Heart right ventricle (tissue), 16 donors: ENCODE measurements at regions of chr9 and their contacts with region 1.

Region 1: DNA sequence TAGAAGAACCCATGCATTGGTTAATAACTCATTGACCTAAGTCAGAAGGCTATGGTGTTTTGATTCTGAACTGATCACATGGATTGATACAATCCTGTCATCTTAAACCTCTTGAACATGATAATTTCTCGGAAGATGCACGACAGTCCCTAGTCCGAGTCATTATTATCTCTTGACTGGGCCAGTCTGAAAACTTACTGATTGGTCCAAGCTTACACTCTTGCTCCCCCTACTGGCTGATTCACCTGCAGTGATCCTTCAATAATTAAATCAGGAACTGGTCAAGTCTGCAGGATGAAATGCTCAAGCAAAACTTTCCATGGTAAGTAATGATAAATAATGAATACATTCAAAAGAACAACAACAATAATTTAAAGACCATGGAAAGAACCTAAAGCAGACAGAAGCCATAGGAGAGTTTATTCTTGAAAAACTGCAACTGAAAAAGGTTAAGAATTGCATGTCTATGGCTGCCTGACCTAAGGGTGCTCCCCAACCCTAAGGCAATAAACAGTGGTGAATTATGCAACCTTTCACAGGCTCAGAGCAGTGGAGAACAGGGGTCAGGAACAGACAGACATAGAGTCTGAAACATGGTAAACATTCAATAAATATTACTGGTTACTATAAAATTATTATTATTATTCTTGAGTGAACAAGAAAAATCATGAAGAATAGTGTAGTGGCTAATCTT is 79.3 kb downstream of the BRINP1 start:
- DNase-seq: peak in 1 of 2 donors; percentile 74
- ATAC-seq: peak in 4 of 8 donors; percentile 51 to 64 (median 60)
- H3K4me3 ChIP-seq: no peak overlapping the region
- H3K27ac ChIP-seq: no peak overlapping the region
- H3K4me1 ChIP-seq: no peaks in the 10 kb centered on the region
- H3K27me3 ChIP-seq: no peaks in the 10 kb centered on the region
- CTCF ChIP-seq: peak; percentile 76 to 87 (median 79)

Region 2: GRCh38 chr9:117644133-117644931 is 1645.6 kb before region 1 on chr9:
- intact Hi-C with region 1: loop called in 2 of 10 experiments (anchors 10 kb)
- DNase-seq: peak; percentile 71 to 73
- ATAC-seq: peak; percentile 55 to 92 (median 82)
- H3K4me3 ChIP-seq: peak overlapping the region in 8 of 10 donors; percentile 15 to 48 (median 38)
- H3K27ac ChIP-seq: peak overlapping the region in 6 of 10 donors; percentile 37 to 80 (median 63)
- H3K4me1 ChIP-seq: peaks cover 0 to 25% (median 13%) of the 10 kb centered on the region in 9 donors
- H3K27me3 ChIP-seq: peaks cover 0 to 46% (median 17%) of the 10 kb centered on the region in 7 donors
- CTCF ChIP-seq: peak; percentile 92 to 99 (median 97)

Region 3: DNA sequence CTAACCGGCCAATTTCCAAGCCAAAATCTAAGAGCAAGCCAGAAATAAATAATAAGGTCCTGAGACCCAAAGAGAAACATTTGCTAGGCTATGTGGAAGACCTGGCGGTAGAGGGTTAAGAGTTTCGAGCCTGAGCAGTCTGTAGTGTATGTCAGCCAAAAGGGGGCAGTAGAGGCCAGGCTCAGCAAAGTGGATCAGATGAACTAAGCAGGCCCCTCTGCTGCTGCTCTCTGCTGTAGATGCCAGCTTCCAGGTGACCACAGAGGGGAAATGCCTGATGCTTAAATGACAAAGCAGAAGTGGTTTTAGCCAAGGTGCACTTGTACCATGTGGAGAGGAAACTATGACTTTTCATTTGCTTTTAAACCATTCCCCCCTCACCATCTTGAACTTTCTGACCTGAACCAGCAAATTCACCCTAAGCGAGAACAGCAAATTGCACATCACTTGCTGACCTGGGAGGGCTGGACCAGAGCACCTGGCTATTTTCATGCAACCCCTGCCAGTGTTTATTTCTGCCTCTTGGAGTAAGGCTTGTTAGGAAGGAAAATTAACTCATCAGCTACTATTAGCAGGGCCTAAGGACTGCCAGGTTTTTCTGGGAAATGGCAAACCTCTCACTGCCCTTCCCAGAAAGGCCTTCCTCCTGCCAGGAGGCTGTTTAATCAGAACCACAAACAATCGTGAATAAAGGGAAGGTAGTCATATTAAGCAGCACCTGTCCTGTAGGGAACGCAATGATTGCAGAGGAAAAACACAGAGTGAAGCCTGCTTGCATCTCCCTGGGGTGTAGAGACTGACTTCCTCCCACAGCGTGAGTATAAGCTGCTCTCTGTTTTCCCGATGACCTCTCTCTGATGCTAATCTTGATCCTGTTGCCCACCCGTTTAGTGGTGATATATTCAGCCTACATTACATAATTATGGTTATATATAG is 767.5 kb before region 1 on chr9:
- intact Hi-C with region 1: loop called in 1 of 10 experiments (anchors 5 kb)
- DNase-seq: peak; percentile 15 to 49
- ATAC-seq: peak in 6 of 8 donors; percentile 23 to 82 (median 48)
- H3K4me3 ChIP-seq: no peak overlapping the region
- H3K27ac ChIP-seq: no peak overlapping the region
- H3K4me1 ChIP-seq: no peaks in the 10 kb centered on the region
- H3K27me3 ChIP-seq: no peaks in the 10 kb centered on the region
- CTCF ChIP-seq: peak; percentile 10 to 75 (median 62)

Region 4: GRCh38 chr9:118829334-118829733 is 460.6 kb before region 1 on chr9:
- intact Hi-C with region 1: loop called in 7 of 10 experiments (anchors 1 to 10 kb)
- DNase-seq: no peak
- ATAC-seq: no peak
- H3K4me3 ChIP-seq: no peak overlapping the region
- H3K27ac ChIP-seq: no peak overlapping the region
- H3K4me1 ChIP-seq: no peaks in the 10 kb centered on the region
- H3K27me3 ChIP-seq: no peaks in the 10 kb centered on the region
- CTCF ChIP-seq: peak; percentile 16 to 77 (median 52)

Region 5: GRCh38 chr9:118992813-118993794 is 296.8 kb before region 1 on chr9:
- intact Hi-C with region 1: loop called in 2 of 10 experiments (anchors 5 to 10 kb)
- DNase-seq: no peak
- ATAC-seq: peak in 1 of 8 donors; percentile 37
- H3K4me3 ChIP-seq: no peak overlapping the region
- H3K27ac ChIP-seq: no peak overlapping the region
- H3K4me1 ChIP-seq: peaks cover 0 to 25% (median 6%) of the 10 kb centered on the region in 9 donors
- H3K27me3 ChIP-seq: no peaks in the 10 kb centered on the region
- CTCF ChIP-seq: peak in 4 of 9 donors; percentile 16 to 23 (median 18)

Region 6: GRCh38 chr9:119334745-119335144 is 44.9 kb after region 1 on chr9:
- intact Hi-C with region 1: no loop called
- DNase-seq: no peak
- ATAC-seq: no peak
- H3K4me3 ChIP-seq: no peak overlapping the region
- H3K27ac ChIP-seq: no peak overlapping the region
- H3K4me1 ChIP-seq: peaks cover 0 to 11% (median 0%) of the 10 kb centered on the region in 9 donors
- H3K27me3 ChIP-seq: no peaks in the 10 kb centered on the region
- CTCF ChIP-seq: no peak

Region 7: DNA sequence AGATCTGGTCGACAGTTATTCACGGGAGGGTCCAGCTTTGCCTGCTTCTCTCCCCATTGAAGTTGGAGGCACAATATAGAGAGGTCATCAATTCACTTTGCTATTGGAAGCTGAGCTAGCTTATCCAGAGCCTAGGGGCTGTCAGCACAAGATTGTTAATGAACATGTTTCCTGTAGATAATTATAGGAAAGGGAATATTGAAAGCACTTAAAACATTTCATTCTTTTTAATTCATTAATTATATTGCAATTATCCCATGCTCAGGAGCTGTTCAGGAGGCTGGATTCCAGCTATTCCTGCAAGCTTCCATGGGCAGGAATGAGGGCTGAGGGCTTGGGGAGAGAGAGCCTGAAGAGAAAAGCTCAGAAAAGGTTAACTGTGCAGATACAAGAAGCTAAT is 232.5 kb after region 1 on chr9:
- intact Hi-C with region 1: no loop called
- DNase-seq: no peak
- ATAC-seq: no peak
- H3K4me3 ChIP-seq: no peak overlapping the region
- H3K27ac ChIP-seq: no peak overlapping the region
- H3K4me1 ChIP-seq: peaks cover 0 to 12% (median 0%) of the 10 kb centered on the region in 9 donors
- H3K27me3 ChIP-seq: no peaks in the 10 kb centered on the region
- CTCF ChIP-seq: no peak

Region 8: GRCh38 chr9:119588874-119589744 is 299.2 kb after region 1 on chr9:
- intact Hi-C with region 1: no loop called
- DNase-seq: no peak
- ATAC-seq: no peak
- H3K4me3 ChIP-seq: no peak overlapping the region
- H3K27ac ChIP-seq: no peak overlapping the region
- H3K4me1 ChIP-seq: no peaks in the 10 kb centered on the region
- H3K27me3 ChIP-seq: peaks cover 0 to 11% (median 4%) of the 10 kb centered on the region in 7 donors
- CTCF ChIP-seq: no peak